Dorsolateral prefrontal cortex (tissue), 120 donors: ENCODE measurements at regions of chr2 and their contacts with region 1.

Region 1: DNA sequence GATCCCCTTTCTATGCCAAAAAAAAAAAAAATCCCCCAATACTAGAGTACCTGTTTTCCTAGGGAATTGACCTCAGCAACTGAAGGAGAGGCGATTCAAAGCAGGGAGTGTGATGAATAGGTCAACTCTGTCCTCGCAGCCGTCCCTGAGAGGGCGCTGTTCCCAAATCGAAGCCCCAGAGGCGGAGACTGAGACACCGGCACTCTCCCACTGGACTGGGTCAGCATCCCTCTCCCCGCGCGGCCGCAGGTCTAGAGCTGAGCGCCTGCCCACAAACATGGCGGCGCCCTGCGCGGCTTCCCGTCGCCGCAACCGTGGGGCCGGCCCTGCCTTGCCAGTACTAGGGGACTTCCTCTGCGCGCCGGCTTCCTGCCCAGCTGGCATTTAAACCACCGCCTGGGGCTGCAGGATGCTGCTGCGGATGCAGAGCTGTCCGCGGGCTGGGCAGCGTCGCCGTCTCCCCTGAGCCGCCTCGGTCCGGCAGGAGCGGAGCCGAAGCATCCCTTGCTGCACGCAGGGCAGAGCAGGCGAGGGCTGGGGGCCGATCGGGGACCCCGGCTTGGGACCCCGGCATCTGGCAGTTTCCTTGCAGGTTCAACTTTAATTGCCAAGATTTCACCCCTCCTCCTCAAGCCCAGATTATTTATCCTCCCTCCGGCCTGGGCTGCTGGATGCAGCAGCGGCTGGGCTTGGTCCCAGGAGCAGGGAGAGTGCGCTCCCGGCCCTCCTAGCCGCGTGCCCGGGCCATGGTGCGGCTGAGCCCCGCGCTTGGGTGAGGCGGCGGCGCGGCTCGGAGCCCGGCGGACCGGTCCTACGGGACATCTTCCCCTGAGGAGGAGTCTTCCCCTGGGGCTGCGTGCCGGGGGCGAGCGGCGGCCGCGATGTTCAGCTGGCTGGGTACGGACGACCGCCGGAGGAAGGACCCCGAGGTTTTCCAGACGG is at the start of gene EHD3:
- DNase-seq: peak; percentile 82 to 97 (median 92)
- H3K4me3 ChIP-seq: peak within 1 kb of the TSS; percentile 58 to 92 (median 80)
- H3K27ac ChIP-seq: peak within 1 kb of the TSS; percentile 18 to 94 (median 86)
- H3K27me3 ChIP-seq: no peaks in the 10 kb centered on the region
- CTCF ChIP-seq: peak; percentile 52 to 92 (median 76)
- total RNA-seq, gene EHD3: 35.8 to 122 (median 93.2) TPM

Region 2: DNA sequence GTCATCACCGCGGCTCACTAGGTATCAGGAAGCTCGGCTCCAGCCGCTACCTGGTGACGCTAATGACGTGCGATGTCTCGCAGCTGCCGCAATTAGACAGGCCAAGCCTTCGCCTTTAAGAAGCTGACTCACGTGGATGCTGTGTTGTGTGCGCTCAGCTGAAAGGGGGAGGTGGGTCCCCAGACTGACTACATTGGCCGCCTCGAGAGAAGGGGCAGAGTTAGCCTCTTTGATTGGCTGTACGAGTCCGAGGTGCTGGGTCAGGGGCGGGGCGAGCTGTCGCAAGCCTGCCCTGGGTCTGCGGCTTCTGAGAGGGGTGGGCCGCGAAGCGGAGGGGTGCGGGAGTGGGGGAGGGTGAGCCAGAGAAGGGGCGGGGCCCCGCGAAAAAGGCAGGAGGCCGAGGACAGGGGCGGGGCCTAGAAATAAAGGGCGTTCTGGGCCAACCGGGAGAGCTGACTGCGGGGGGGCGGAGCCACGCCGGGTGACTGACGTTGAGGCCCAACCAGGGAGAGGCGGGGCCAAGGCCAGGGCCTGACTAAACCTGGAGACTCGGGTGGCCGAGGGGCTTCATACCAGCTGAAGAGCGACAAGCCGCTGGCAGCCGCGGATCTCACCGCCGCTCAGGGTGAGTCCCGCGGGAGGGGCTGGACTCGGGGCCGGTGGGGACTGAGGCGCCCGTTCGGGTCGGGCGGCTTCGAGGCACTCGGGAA is 1087.4 kb before region 1 on chr2 and contains the start of gene YPEL5:
- intact Hi-C with region 1: loop called in 1 of 2 experiments (anchors 10 kb)
- DNase-seq: peak; percentile 98 to 99 (median 99)
- H3K4me3 ChIP-seq: peak within 1 kb of the TSS; percentile 64 to 100 (median 96)
- H3K27ac ChIP-seq: peak within 1 kb of the TSS; percentile 81 to 99 (median 96)
- H3K27me3 ChIP-seq: no peaks in the 10 kb centered on the region
- CTCF ChIP-seq: peak in 14 of 56 donors; percentile 3 to 46 (median 18)
- total RNA-seq, gene YPEL5: 79.6 to 221 (median 158) TPM

Region 3: GRCh38 chr2:31138037-31138962 is 95.7 kb before region 1 on chr2 and contains the start of gene GALNT14:
- intact Hi-C with region 1: loop called in 1 of 2 experiments (anchors 2 kb)
- DNase-seq: peak; percentile 32 to 76 (median 54)
- H3K4me3 ChIP-seq: peak within 1 kb of the TSS; percentile 33 to 79 (median 66)
- H3K27ac ChIP-seq: peak within 1 kb of the TSS in 38 of 59 donors; percentile 5 to 76 (median 39)
- H3K27me3 ChIP-seq: peaks cover 0 to 19% (median 0%) of the 10 kb centered on the region in 45 donors
- CTCF ChIP-seq: peak in 55 of 56 donors; percentile 11 to 71 (median 53)
- total RNA-seq, gene GALNT14: 4.0 to 20.3 (median 11.8) TPM

Region 4: GRCh38 chr2:31255911-31256571 is 22.0 kb after region 1 on chr2:
- intact Hi-C with region 1: loop called in 1 of 2 experiments (anchors 2 kb)
- DNase-seq: no peak
- H3K4me3 ChIP-seq: no peak overlapping the region
- H3K27ac ChIP-seq: peak overlapping the region in 38 of 59 donors; percentile 0 to 81 (median 50)
- H3K27me3 ChIP-seq: no peaks in the 10 kb centered on the region
- CTCF ChIP-seq: no peak